ENCODE measurements at regions of chr7 and their contacts with region 1.

Region 1: DNA sequence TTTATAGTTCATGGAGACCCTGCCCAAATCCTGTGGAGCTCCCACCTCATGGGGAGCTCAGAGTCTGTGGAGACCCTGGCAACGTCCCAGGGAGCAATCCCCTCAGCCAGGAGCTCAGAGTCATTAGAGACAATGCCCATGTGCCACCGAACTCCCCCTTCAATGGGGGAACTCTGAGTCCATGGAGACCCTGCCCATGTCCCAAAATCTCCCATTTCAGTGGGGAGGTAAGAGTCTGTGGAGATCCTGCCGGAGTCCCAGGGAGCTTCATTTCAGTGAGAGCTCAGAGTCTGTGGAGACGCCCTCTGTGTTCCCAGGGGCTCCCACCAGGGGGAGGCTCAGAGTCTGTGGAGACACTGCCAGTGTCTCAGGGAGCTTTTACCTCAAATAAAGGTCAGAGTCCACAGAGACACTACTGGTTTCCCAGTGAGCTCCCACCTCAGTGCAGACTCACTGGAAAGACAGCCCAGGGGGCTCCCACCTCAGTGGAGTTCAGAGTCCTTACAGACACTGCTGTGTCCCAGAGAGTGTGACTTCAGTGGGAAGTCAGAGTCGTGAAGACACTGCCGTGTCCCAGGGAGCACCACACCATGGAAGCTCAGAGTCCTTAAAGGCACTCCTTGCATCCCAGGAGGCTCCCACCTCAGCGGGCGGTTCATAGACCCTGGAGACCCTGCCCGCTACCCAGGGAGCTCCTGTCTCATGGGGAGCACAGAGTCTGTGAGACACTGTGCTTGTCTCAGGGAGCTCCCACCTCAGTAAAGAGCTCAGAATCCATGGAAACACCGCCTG is 5.0 kb downstream of the MYO1G start:
- DNase-seq: peak; percentile 44 to 72 (median 61)
- H3K4me3 ChIP-seq: no peak overlapping the region
- H3K4me3 Mint-ChIP-seq: peak overlapping the region in 1 of 8 donors; percentile 46
- H3K27ac ChIP-seq: peak overlapping the region; percentile 85
- H3K27ac Mint-ChIP-seq: peak overlapping the region in 6 of 7 donors; percentile 43 to 84 (median 51)
- H3K4me1 ChIP-seq: peaks cover 50% of the 10 kb centered on the region
- H3K4me1 Mint-ChIP-seq: peaks cover 12 to 62% (median 37%) of the 10 kb centered on the region in 4 donors
- H3K27me3 ChIP-seq: no peaks in the 10 kb centered on the region
- H3K27me3 Mint-ChIP-seq: no peaks in the 10 kb centered on the region

Region 2: DNA sequence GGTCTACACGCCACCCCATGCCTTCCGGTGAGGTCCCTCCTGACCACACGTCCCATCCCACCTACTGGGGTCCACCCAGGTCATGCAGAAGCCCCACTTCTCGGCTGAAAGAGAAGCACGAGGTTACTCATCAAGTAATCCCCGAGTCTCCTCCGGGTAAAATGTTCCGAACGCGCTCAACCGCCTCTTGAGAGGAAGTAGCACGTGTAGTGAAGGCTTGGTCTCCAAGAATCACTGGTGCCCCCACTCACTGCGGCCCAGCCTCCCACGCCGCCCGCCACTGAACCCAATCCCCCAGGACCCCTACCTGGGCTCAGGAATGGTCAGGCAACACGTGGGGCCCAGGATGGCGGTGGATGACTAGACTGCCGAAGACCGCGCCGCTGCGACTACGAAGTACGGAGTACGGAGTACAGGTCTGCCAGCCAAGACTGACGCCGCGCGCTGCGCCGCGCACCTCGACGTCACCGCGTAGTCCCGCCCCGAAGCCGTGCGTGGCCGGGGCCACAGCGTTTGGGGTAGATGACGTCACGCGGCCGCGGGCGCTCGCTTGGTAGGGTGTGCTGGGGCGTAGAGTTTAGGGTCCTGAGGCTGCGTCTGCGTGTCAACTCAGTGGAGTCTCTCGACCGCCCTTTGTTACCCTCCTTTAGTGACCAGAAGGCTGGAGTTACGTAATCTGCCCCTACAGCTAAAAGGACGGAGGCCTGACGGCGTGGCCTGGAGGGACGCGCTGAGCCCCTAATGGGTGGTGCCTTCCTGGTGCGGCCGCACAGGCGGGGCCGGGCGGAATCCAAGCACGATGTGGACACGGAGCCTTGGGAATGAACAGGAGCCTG is 12.6 kb after region 1 on chr7:
- CTCF ChIA-PET with region 1: interaction called, 21 read pairs
- POLR2A ChIA-PET with region 1: interaction called, 479 read pairs
- intact Hi-C with region 1: loop called (anchors 1 kb)
- DNase-seq: peak; percentile 94 to 96 (median 95)
- H3K4me3 ChIP-seq: peak overlapping the region; percentile 76 to 82
- H3K4me3 Mint-ChIP-seq: peak overlapping the region; percentile 95 to 98 (median 96)
- H3K27ac ChIP-seq: peak overlapping the region; percentile 98
- H3K27ac Mint-ChIP-seq: peak overlapping the region; percentile 98 to 100 (median 99)
- H3K4me1 ChIP-seq: peaks cover 54% of the 10 kb centered on the region
- H3K4me1 Mint-ChIP-seq: peaks cover 35 to 64% (median 48%) of the 10 kb centered on the region in 4 donors
- H3K27me3 ChIP-seq: no peaks in the 10 kb centered on the region
- H3K27me3 Mint-ChIP-seq: no peaks in the 10 kb centered on the region

Region 3: DNA sequence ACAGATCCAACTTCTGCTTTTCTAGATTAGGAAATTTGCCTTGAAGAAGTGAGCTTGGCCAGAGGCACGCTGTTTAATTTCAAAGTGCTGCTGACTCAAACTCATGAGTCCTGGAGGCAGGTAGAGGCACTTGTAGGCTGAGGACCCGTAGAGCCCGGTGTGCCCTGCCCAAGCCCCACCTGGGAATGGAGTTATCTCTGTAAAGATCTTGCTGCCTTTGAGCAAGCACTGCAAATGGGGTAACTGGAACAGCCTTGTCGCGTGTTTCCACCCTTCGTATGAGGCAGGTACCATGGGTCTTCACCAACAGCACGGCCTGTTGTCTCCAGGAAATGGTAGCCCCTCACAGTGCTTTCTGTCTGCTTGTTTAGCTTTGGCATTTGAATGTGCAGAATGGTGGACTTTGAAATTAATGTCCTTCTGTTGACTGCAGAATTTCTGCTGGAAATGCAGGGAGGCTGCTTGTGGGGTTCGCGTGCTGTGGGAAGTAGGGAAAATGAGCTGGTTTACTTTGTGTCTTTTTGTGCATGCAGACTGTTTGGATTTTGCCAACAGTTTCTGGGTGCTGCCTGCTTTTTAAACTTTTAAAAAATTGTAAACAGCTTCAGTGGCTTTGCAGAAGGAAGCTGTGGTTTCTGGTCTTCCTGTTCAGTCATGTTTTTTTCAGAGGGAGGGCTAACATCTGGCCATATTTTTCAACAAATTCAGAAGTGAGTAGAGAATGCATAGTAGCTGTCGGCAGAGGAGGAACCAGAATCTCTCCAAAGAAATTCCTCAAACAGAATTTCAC is 53.4 kb after region 1 on chr7:
- CTCF ChIA-PET with region 1: interaction called, 120 read pairs
- POLR2A ChIA-PET with region 1: interaction called, 551 read pairs
- intact Hi-C with region 1: loop called (anchors 1 kb)
- DNase-seq: peak; percentile 65 to 76 (median 67)
- H3K4me3 ChIP-seq: peak overlapping the region; percentile 97
- H3K4me3 Mint-ChIP-seq: peak overlapping the region; percentile 88 to 98 (median 95)
- H3K27ac ChIP-seq: peak overlapping the region; percentile 82
- H3K27ac Mint-ChIP-seq: peak overlapping the region; percentile 88 to 97 (median 92)
- H3K4me1 ChIP-seq: peaks cover 73% of the 10 kb centered on the region
- H3K4me1 Mint-ChIP-seq: peaks cover 37 to 78% (median 51%) of the 10 kb centered on the region in 4 donors
- H3K27me3 ChIP-seq: no peaks in the 10 kb centered on the region
- H3K27me3 Mint-ChIP-seq: no peaks in the 10 kb centered on the region

Region 4: GRCh38 chr7:45052011-45052410 is 78.2 kb after region 1 on chr7:
- CTCF ChIA-PET with region 1: interaction called, 22 read pairs
- POLR2A ChIA-PET with region 1: interaction called, 4 read pairs
- intact Hi-C with region 1: no loop called
- DNase-seq: no peak
- H3K4me3 ChIP-seq: no peak overlapping the region
- H3K4me3 Mint-ChIP-seq: no peak overlapping the region
- H3K27ac ChIP-seq: no peak overlapping the region
- H3K27ac Mint-ChIP-seq: peak overlapping the region in 5 of 7 donors; percentile 11 to 79 (median 60)
- H3K4me1 ChIP-seq: peaks cover 48% of the 10 kb centered on the region
- H3K4me1 Mint-ChIP-seq: peaks cover 43 to 79% (median 61%) of the 10 kb centered on the region in 4 donors
- H3K27me3 ChIP-seq: no peaks in the 10 kb centered on the region
- H3K27me3 Mint-ChIP-seq: no peaks in the 10 kb centered on the region

Region 5: DNA sequence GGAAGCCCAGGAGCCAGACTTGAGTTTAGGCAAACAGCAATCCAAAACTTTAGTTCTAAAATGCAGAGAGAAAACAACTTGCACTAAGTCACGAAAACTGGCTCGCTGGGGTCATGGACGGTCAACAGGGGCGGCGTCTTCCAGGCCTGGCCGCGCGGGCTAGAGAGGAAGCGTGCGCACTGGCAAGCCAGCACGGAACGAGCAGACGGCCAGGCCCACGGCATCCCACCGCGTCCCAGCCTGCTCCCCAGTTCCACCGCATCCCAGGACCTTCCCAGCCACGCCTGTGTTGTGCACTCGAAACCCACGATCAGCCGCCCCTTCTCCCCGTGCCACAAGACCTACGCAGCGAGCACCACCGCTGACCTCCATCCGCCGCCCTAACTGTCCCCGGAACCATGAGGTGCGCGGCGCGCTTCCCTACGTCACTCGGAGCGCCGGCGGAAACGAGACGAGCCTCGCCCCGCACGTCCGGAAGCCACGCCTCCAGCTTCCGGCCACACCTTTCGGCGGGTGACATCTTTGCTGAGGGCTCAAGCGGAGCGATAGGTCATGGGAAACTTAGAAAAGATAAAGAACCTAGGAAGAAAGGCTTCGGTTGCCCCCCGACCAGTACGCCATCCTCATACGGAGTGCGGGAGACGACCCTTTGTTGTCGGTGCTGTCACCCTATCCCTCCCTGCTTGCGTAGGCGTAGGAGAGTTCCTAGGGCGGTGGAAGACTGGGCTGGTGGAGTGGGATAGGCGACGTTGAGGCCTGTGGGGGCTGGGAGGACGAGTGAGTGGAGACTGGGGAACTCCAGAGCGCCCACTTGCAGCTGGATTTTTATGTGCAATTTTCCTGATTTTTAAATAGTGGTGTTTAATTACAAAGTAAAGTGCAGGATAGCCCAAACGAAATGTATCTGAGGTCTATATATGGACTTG is 137.8 kb after region 1 on chr7 and contains the start of gene TBRG4:
- CTCF ChIA-PET with region 1: interaction called, 13 read pairs
- POLR2A ChIA-PET with region 1: interaction called, 14 read pairs
- intact Hi-C with region 1: loop called (anchors 1 kb)
- DNase-seq: peak; percentile 91 to 94 (median 94)
- H3K4me3 ChIP-seq: peak within 1 kb of the TSS; percentile 94 to 95
- H3K4me3 Mint-ChIP-seq: peak within 1 kb of the TSS; percentile 91 to 99 (median 97)
- H3K27ac ChIP-seq: peak within 1 kb of the TSS; percentile 87
- H3K27ac Mint-ChIP-seq: peak within 1 kb of the TSS; percentile 97 to 100 (median 99)
- H3K4me1 ChIP-seq: peaks cover 48% of the 10 kb centered on the region
- H3K4me1 Mint-ChIP-seq: peaks cover 28 to 60% (median 44%) of the 10 kb centered on the region in 4 donors
- H3K27me3 ChIP-seq: no peaks in the 10 kb centered on the region
- H3K27me3 Mint-ChIP-seq: peaks cover 4% of the 10 kb centered on the region in 2 donors
- total RNA-seq, gene TBRG4: 103 to 129 TPM

Measured in CD4-positive, alpha-beta memory T cell (primary cell).